HAP-1 (cell line): ENCODE measurements at regions of chr16 and their contacts with region 1.

Region 1: DNA sequence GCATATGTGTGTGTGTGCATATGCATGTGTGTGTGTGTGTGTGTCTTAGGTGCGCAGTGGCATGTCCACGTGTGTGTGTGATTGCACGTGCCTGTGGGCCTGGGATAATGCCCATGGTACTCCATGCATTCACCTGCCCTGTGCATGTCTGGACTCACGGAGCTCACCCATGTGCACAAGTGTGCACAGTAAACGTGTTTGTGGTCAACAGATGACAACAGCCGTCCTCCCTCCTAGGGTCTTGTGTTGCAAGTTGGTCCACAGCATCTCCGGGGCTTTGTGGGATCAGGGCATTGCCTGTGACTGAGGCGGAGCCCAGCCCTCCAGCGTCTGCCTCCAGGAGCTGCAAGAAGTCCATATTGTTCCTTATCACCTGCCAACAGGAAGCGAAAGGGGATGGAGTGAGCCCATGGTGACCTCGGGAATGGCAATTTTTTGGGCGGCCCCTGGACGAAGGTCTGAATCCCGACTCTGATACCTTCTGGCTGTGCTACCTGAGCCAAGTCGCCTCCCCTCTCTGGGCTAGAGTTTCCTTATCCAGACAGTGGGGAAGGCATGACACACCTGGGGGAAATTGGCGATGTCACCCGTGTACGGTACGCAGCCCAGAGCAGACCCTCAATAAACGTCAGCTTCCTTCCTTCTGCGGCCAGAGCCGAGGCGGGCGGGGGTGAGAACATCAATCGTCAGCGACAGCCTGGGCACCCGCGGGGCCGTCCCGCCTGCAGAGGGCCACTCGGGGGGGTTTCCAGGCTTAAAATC is 47.6 kb downstream of the IL21R start:
- DNase-seq: no peak
- H3K4me3 ChIP-seq: no peak overlapping the region
- H3K4me1 ChIP-seq: no peaks in the 10 kb centered on the region
- H3K27me3 ChIP-seq: no peaks in the 10 kb centered on the region

Region 2: DNA sequence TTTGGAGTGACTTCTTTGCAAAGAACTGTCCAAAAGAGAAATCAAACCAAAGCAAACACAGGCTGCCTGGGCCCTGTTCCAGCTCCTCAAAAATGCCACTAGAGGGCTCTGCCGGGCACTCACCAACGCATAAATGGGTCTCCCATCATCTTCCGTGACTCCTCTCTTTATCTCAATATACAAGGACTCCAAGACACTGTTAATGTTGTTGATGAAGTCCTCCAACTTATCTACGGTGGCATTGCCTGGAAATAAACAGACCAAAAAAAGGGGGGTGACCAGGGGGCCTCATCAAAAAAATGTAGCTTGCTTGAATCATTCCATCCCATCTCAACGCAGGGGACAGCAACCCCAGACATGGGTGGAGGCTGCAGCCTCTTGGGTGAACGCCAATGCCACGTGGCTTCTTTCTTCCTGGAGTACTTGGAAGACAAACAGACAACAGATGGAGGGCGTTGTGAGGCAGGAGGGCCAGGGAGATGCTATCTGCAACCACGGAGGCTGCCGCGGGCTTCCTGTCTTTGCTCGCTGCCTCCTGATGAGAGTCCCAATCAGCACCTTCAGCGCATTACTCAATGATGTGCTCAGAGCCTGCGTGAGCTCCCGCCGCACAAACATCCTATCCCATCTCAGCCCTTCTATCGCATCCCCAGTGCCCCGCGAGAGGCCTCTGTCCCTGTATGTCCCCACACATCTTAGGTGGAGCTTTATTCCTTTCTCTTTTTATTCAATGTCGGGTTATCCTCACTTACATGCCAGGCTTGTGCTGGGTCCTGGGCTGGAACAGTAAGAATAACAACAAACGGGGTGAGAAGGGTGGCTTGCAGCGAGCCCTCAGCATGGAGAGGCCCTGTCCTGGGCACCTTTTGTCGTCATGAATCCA is 214.3 kb before region 1 on chr16:
- in situ Hi-C with region 1: loop called (anchors 25 kb)
- DNase-seq: peak; percentile 49 to 59
- H3K4me3 ChIP-seq: no peak overlapping the region
- H3K4me1 ChIP-seq: no peaks in the 10 kb centered on the region
- H3K27me3 ChIP-seq: no peaks in the 10 kb centered on the region